ENCODE measurements at regions of chr1 and their contacts with region 1.

Region 1: GRCh38 chr1:165827268-165828102 is at the start of gene UCK2:
- DNase-seq: peak; percentile 70
- ATAC-seq: peak; percentile 75
- H3K4me3 Mint-ChIP-seq: peak within 1 kb of the TSS; percentile 92
- H3K27ac Mint-ChIP-seq: peak within 1 kb of the TSS; percentile 80
- H3K4me1 Mint-ChIP-seq: peaks cover 21% of the 10 kb centered on the region
- H3K27me3 Mint-ChIP-seq: no peaks in the 10 kb centered on the region
- CTCF ChIP-seq: no peak
- total RNA-seq, gene UCK2: 19.6 and 22.8 TPM in 2 replicates

Region 2: DNA sequence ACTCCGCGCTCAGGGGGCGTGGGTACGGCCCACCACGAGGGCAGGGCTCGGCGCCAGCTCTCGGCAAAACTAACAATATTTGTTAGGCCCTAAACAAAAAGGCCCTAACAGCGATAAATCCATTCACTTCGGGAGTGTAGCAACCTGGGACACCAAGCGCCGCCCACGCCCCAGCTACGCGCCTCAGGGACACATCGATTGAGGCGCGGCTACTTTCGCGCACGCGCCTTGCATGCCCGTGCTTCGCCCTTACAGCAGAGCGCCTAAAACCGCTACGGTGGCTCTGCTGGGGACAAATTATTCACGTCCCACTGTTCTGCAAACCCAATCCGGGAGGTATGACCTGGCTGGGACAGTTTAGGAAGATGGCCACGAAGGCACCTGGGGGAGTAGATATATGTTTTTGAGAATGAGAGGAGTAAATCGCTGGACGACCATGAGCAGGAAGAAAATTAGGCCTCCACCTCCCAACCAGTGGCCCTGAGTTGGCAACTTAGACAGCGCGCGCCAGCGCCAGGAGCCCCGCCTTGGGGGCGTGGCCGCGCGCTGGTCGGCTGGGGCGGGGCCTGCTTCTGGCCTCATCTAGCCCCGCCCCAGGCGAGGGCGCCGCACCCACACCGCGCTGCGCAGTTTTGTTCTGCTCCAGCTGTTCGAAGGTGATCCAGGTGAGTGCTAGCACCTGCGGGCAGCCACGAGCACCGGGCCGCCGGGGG is 196.7 kb before region 1 on chr1 and contains the start of gene MGST3:
- CTCF ChIA-PET with region 1: no interaction called
- POLR2A ChIA-PET with region 1: no interaction called
- intact Hi-C with region 1: loop called (anchors 1 kb)
- DNase-seq: peak; percentile 84
- ATAC-seq: peak; percentile 93
- H3K4me3 Mint-ChIP-seq: no peak within 1 kb of the TSS
- H3K27ac Mint-ChIP-seq: no peak within 1 kb of the TSS
- H3K4me1 Mint-ChIP-seq: peaks cover 33% of the 10 kb centered on the region
- H3K27me3 Mint-ChIP-seq: no peaks in the 10 kb centered on the region
- CTCF ChIP-seq: no peak
- total RNA-seq, gene MGST3: 31.3 and 33.4 TPM in 2 replicates

Region 3: DNA sequence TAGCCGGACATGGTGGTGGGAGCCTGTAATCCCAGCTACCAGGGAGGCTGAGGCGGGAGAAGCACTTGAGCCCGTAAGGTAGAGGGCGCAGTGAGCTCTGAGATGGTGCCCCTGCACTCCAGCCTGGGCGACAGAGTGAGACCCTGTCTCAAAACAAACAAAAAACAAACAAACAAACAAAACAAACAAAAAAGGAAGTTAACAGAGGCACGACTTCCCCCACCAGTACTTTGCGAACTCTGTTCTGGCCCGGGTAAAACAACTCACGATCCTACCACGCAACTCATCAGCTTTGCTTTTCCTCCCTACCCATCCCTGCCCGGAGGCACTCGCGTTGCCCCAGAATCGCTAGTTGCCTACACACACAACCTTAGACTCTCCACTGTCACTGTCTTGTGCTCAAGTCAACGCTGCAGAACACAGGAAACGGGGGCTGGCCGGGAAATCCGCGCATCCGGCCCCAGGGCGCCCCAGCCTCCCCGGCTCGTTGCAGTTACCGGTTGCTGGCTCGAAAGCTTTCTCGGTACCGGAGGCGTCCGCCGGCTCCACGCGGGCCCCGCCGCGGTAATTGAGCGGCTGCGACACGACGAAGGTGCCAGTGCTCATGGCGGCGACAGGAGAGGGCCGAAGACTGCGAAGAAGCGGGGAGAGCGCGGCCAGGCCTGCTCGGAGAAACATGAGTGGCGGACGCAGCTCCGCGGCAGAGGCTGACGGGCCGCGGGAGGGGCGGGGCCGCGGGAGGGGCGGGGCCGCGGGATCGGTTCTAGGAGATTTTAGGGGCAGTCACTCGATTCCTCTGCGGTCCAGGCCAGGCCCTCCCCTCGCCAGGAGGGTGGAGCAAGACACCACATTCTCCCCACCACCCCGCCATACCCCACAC is 129.4 kb before region 1 on chr1 and contains the start of gene ALDH9A1:
- CTCF ChIA-PET with region 1: interaction called, 3 read pairs
- POLR2A ChIA-PET with region 1: no interaction called
- intact Hi-C with region 1: loop called (anchors 1 kb)
- DNase-seq: peak; percentile 86
- ATAC-seq: peak; percentile 93
- H3K4me3 Mint-ChIP-seq: peak within 1 kb of the TSS; percentile 91
- H3K27ac Mint-ChIP-seq: peak within 1 kb of the TSS; percentile 91
- H3K4me1 Mint-ChIP-seq: peaks cover 27% of the 10 kb centered on the region
- H3K27me3 Mint-ChIP-seq: peaks cover 4% of the 10 kb centered on the region
- CTCF ChIP-seq: no peak
- total RNA-seq, gene ALDH9A1: 30.3 and 35.8 TPM in 2 replicates

Region 4: DNA sequence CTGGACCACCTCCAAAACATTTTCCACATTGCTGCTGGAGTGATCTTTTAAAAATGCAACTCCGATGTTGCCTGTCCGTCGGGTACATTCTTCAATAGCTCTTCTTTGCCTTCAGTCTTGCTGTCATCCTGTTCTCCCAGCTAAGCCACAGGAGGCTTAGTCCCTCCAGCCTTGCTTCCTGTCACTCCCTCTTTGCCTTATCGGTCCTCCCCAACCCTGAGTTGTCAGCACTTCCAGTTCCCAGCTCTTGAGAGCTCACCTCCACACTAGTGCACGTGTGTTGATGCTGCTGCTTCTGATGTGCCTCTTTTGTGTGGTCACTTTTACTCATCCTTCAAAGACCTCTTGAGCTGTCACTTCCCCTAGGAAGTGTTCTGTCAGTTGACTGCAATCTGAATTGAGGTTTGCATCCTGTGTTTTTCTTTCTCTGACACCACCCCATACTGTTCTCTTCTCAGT is 15.2 kb after region 1 on chr1:
- CTCF ChIA-PET with region 1: no interaction called
- POLR2A ChIA-PET with region 1: interaction called, 5 read pairs
- intact Hi-C with region 1: loop called (anchors 2 kb)
- DNase-seq: no peak
- ATAC-seq: no peak
- H3K4me3 Mint-ChIP-seq: no peak overlapping the region
- H3K27ac Mint-ChIP-seq: no peak overlapping the region
- H3K4me1 Mint-ChIP-seq: peaks cover 19% of the 10 kb centered on the region
- H3K27me3 Mint-ChIP-seq: no peaks in the 10 kb centered on the region
- CTCF ChIP-seq: no peak

Region 5: GRCh38 chr1:165871311-165872067 is 44.0 kb after region 1 on chr1:
- CTCF ChIA-PET with region 1: interaction called, 4 read pairs
- POLR2A ChIA-PET with region 1: interaction called, 3 read pairs
- intact Hi-C with region 1: loop called (anchors 1 kb)
- DNase-seq: no peak
- ATAC-seq: peak; percentile 76
- H3K4me3 Mint-ChIP-seq: peak overlapping the region; percentile 33
- H3K27ac Mint-ChIP-seq: peak overlapping the region; percentile 76
- H3K4me1 Mint-ChIP-seq: peaks cover 28% of the 10 kb centered on the region
- H3K27me3 Mint-ChIP-seq: no peaks in the 10 kb centered on the region
- CTCF ChIP-seq: no peak